SK-N-SH (cell line): ENCODE measurements at regions of chr16 and their contacts with region 1.

Region 1: GRCh38 chr16:48687421-48688038 is 77.5 kb upstream of the N4BP1 start:
- DNase-seq: peak; percentile 68
- H3K4me3 ChIP-seq: no peak overlapping the region; a peak in 1 of 4 replicates
- H3K27ac ChIP-seq: no peak overlapping the region
- H3K4me1 ChIP-seq: no peaks in the 10 kb centered on the region
- H3K27me3 ChIP-seq: no peaks in the 10 kb centered on the region; the same call in 1 of the 2 replicates
- CTCF ChIP-seq: peak; percentile 78
- EP300 ChIP-seq: no peak
- RAD21 ChIP-seq: peak; percentile 88

Region 2: GRCh38 chr16:48542020-48542473 is 145.5 kb before region 1 on chr16:
- CTCF ChIA-PET with region 1: no interaction called
- POLR2A ChIA-PET with region 1: no interaction called
- DNase-seq: peak; percentile 78
- H3K4me3 ChIP-seq: no peak overlapping the region
- H3K27ac ChIP-seq: no peak overlapping the region
- H3K4me1 ChIP-seq: no peaks in the 10 kb centered on the region; a peak in 1 of 4 replicates
- H3K27me3 ChIP-seq: no peaks in the 10 kb centered on the region
- CTCF ChIP-seq: peak; percentile 69
- EP300 ChIP-seq: no peak
- RAD21 ChIP-seq: peak; percentile 88

Region 3: DNA sequence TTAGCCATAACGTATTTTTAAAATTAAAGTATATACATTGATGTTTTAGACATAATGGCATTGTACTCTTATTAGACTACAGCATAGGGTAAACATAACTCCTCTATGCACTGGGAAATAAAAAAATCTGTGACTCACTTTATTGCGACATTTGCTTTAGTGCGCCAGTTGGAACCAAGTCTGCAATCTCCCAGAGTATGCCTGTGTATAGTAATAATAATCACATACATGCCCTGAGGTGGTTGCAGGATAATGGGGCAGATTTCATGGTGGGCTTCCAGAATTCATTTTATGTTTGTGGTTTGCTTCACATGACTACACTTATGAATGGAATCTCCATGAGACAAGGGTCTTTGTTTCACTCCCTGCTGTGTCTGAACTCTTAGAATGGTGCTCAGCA is 10.7 kb before region 1 on chr16:
- CTCF ChIA-PET with region 1: interaction called, 12 read pairs
- POLR2A ChIA-PET with region 1: no interaction called
- DNase-seq: no peak
- H3K4me3 ChIP-seq: no peak overlapping the region
- H3K27ac ChIP-seq: no peak overlapping the region
- H3K4me1 ChIP-seq: no peaks in the 10 kb centered on the region
- H3K27me3 ChIP-seq: no peaks in the 10 kb centered on the region
- CTCF ChIP-seq: no peak
- EP300 ChIP-seq: no peak
- RAD21 ChIP-seq: no peak